GM12878 (cell line): ENCODE measurements at regions of chr1 and their contacts with region 1.

Region 1: GRCh38 chr1:224851210-224851847 is 78.1 kb upstream of the DNAH14 start:
- DNase-seq: peak; percentile 41
- ATAC-seq: peak; percentile 95
- H3K4me3 ChIP-seq: no peak overlapping the region
- H3K27ac ChIP-seq: no peak overlapping the region
- H3K4me1 ChIP-seq: no peaks in the 10 kb centered on the region
- H3K27me3 ChIP-seq: no peaks in the 10 kb centered on the region; a peak in 1 of 4 replicates
- CTCF ChIP-seq: peak; percentile 81 to 89 (median 87)
- EP300 ChIP-seq: no peak
- POLR2A ChIP-seq: no peak
- RAD21 ChIP-seq: peak; percentile 80

Region 2: GRCh38 chr1:224497714-224498573 is 353.4 kb before region 1 on chr1:
- CTCF ChIA-PET with region 1: interaction called, 14 read pairs
- POLR2A ChIA-PET with region 1: no interaction called
- RAD21 ChIA-PET with region 1: interaction called, 8 read pairs
- SMC1A ChIA-PET with region 1: interaction called, 9 read pairs
- in situ Hi-C with region 1: no loop called
- intact Hi-C with region 1: no loop called
- DNase-seq: peak; percentile 80
- ATAC-seq: peak; percentile 98
- H3K4me3 ChIP-seq: peak overlapping the region; percentile 28; the same call in 1 of the 2 replicates
- H3K27ac ChIP-seq: peak overlapping the region; percentile 92
- H3K4me1 ChIP-seq: peaks cover 37% of the 10 kb centered on the region
- H3K27me3 ChIP-seq: no peaks in the 10 kb centered on the region
- CTCF ChIP-seq: no peak
- EP300 ChIP-seq: peak in 1 of 2 experiments; percentile 82; a peak in 2 of 4 replicates
- POLR2A ChIP-seq: peak; percentile 54
- RAD21 ChIP-seq: no peak

Region 3: DNA sequence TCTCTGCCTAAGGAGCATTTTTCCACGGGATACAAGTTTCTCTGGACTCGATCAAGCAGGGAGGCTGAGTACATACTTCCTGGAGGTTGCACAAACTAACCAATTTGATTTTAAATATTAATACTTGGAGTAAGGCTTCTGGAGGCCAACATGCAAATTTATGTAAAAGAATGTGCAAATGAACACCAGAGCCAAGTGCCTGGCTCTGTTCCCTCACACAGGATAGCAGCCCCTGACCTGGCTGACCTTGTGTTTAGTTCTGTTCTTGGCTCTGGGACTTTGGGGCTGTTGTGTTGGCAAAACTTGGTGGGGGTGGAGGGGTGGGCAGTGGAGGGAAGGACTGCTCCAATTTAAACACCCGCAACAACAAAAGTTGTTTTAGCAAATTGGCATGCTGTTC is 201.0 kb before region 1 on chr1:
- CTCF ChIA-PET with region 1: interaction called, 207 read pairs
- POLR2A ChIA-PET with region 1: no interaction called
- RAD21 ChIA-PET with region 1: interaction called, 90 read pairs
- SMC1A ChIA-PET with region 1: interaction called, 147 read pairs
- in situ Hi-C with region 1: no loop called
- intact Hi-C with region 1: no loop called
- DNase-seq: no peak
- ATAC-seq: no peak
- H3K4me3 ChIP-seq: no peak overlapping the region
- H3K27ac ChIP-seq: no peak overlapping the region
- H3K4me1 ChIP-seq: no peaks in the 10 kb centered on the region
- H3K27me3 ChIP-seq: no peaks in the 10 kb centered on the region
- CTCF ChIP-seq: no peak
- EP300 ChIP-seq: no peak
- POLR2A ChIP-seq: no peak
- RAD21 ChIP-seq: no peak

Region 4: DNA sequence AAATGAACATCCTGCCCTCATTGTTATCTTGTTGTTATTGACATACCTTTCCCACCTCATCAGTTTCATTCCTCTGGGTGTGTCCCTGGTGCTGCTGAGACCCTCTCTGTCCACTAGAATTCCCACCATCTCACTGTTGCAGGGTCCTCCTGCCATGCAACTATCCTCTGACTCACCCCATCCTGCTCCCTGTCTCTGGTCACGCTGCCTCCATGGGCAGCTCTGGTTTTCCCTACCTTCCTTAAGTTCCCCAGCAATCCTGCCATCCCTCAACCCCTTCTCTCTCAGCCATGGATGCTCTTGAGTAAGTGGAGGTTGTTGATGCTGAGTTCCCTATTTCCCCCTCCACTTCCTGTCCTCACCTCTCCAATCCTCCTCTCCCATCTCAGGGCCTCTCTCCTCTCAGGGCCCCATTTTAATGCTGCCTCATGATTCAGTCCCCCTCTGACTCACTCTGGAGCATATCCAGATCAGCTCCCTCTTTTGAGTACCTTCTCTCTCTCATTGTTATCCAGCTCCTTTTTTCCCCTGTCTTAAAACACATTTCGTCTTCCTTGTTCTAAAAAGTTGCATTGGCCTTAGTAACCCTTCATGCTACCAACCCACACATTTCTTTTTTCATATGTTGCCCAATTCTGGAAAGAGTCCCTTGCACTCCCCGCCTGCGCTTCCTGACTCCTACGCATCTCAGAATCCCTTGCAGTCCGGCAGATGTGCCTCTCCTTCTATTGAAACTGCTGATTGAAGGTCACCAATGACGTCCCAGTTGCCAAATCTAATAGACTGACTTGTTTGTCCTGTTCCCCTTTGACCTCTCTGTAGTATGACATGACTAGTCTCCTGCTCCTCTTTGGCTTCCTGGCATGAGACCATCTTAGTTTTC is 143.2 kb before region 1 on chr1:
- CTCF ChIA-PET with region 1: interaction called, 107 read pairs
- POLR2A ChIA-PET with region 1: no interaction called
- RAD21 ChIA-PET with region 1: no interaction called
- SMC1A ChIA-PET with region 1: interaction called, 96 read pairs
- in situ Hi-C with region 1: loop called (anchors 5 kb)
- intact Hi-C with region 1: no loop called
- DNase-seq: no peak
- ATAC-seq: peak; percentile 51
- H3K4me3 ChIP-seq: no peak overlapping the region
- H3K27ac ChIP-seq: no peak overlapping the region
- H3K4me1 ChIP-seq: no peaks in the 10 kb centered on the region
- H3K27me3 ChIP-seq: no peaks in the 10 kb centered on the region
- CTCF ChIP-seq: no peak
- EP300 ChIP-seq: no peak
- POLR2A ChIP-seq: no peak
- RAD21 ChIP-seq: no peak

Region 5: DNA sequence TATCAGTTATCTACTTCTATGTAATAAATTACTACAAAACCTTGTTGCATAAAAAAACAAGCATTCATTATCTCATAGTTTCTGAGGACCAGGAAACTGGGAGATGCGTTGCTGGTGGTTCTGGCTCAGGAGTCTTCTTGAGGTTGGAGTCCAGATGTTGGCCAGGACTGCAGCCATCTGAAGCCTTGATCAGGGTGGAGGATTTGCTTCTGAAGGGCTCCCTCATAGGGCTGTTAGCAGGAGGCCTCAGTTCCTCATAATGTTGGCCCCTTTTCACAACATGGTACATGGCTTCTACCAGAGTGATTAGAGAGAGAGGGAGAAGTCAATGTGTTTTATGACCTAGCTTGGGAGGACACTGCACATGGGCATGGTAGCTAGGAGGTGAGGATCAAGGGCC is 97.8 kb before region 1 on chr1:
- CTCF ChIA-PET with region 1: interaction called, 21 read pairs
- POLR2A ChIA-PET with region 1: no interaction called
- RAD21 ChIA-PET with region 1: interaction called, 10 read pairs
- SMC1A ChIA-PET with region 1: interaction called, 21 read pairs
- in situ Hi-C with region 1: no loop called
- intact Hi-C with region 1: no loop called
- DNase-seq: no peak
- ATAC-seq: peak; percentile 43
- H3K4me3 ChIP-seq: no peak overlapping the region
- H3K27ac ChIP-seq: no peak overlapping the region
- H3K4me1 ChIP-seq: peaks cover 34% of the 10 kb centered on the region
- H3K27me3 ChIP-seq: no peaks in the 10 kb centered on the region
- CTCF ChIP-seq: no peak
- EP300 ChIP-seq: no peak
- POLR2A ChIP-seq: no peak
- RAD21 ChIP-seq: no peak

Region 6: GRCh38 chr1:224819861-224820260 is 31.5 kb before region 1 on chr1:
- CTCF ChIA-PET with region 1: interaction called, 11 read pairs
- POLR2A ChIA-PET with region 1: no interaction called
- RAD21 ChIA-PET with region 1: interaction called, 3 read pairs
- SMC1A ChIA-PET with region 1: no interaction called
- in situ Hi-C with region 1: no loop called
- intact Hi-C with region 1: no loop called
- DNase-seq: no peak
- ATAC-seq: no peak
- H3K4me3 ChIP-seq: no peak overlapping the region
- H3K27ac ChIP-seq: no peak overlapping the region
- H3K4me1 ChIP-seq: no peaks in the 10 kb centered on the region
- H3K27me3 ChIP-seq: no peaks in the 10 kb centered on the region
- CTCF ChIP-seq: no peak
- EP300 ChIP-seq: no peak
- POLR2A ChIP-seq: no peak
- RAD21 ChIP-seq: no peak

Region 7: DNA sequence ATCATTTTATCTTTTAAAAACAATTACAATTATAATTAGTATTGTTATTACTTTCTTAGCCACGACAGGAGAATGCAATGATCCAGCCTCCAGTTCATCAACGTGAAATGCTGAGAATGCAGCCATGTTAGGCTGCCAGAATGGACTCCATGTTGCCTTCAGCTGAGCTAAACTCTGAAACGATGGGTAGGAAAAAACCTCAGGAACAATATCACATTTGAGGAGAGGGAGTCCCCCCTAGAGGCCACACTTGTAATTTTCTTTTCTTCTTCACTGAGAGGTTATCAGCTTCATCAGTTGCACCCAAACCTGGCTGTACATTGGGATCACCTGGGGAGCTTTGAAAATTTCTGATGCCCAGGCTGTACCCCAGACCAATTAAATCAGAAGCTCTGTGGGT is 43.6 kb after region 1 on chr1:
- CTCF ChIA-PET with region 1: interaction called, 16 read pairs
- POLR2A ChIA-PET with region 1: no interaction called
- RAD21 ChIA-PET with region 1: interaction called, 5 read pairs
- SMC1A ChIA-PET with region 1: interaction called, 26 read pairs
- in situ Hi-C with region 1: no loop called
- intact Hi-C with region 1: no loop called
- DNase-seq: no peak
- ATAC-seq: peak; percentile 61
- H3K4me3 ChIP-seq: no peak overlapping the region
- H3K27ac ChIP-seq: no peak overlapping the region
- H3K4me1 ChIP-seq: no peaks in the 10 kb centered on the region
- H3K27me3 ChIP-seq: no peaks in the 10 kb centered on the region
- CTCF ChIP-seq: peak; percentile 17 to 20 (median 17); a peak in 3 of 6 replicates
- EP300 ChIP-seq: no peak
- POLR2A ChIP-seq: no peak
- RAD21 ChIP-seq: peak; percentile 26